Adrenal gland (tissue), 19 donors: ENCODE measurements at regions of chr6 and their contacts with region 1.

Region 1: GRCh38 chr6:15458021-15458459 is 204.8 kb downstream of the DTNBP1 start:
- DNase-seq: no peak
- H3K4me3 ChIP-seq: no peak overlapping the region
- H3K27ac ChIP-seq: no peak overlapping the region
- H3K4me1 ChIP-seq: peaks cover 19 to 36% of the 10 kb centered on the region in 2 donors
- H3K27me3 ChIP-seq: no peaks in the 10 kb centered on the region
- CTCF ChIP-seq: no peak
- POLR2A ChIP-seq: no peak

Region 2: DNA sequence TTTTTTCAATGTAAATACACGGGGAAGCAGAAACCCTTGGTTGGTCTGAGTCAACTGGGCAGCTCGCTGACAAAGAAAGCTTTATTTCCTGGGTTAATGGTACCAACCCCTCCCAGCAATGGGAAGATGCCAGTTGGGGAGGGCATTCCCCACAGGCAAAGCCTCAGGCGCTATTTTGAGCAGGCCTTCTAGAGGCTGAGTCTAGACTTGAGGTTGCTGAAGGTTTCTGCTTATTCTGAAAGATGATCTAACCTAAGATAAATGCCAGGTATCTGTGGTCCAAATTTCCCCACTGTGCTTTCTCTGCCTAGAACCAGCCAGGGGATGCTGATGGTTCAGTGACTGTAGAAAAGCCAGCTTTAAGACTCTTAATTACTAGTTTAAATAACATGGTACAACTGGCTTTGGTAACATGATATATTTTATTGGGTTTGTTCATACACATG is 384.7 kb before region 1 on chr6:
- intact Hi-C with region 1: loop called in 1 of 2 experiments (anchors 10 kb)
- DNase-seq: no peak
- H3K4me3 ChIP-seq: no peak overlapping the region
- H3K27ac ChIP-seq: no peak overlapping the region
- H3K4me1 ChIP-seq: no peaks in the 10 kb centered on the region
- H3K27me3 ChIP-seq: no peaks in the 10 kb centered on the region
- CTCF ChIP-seq: no peak
- POLR2A ChIP-seq: no peak

Region 3: GRCh38 chr6:15441215-15441868 is 16.7 kb before region 1 on chr6:
- intact Hi-C with region 1: no loop called
- DNase-seq: peak; percentile 34 to 79 (median 51)
- H3K4me3 ChIP-seq: no peak overlapping the region
- H3K27ac ChIP-seq: no peak overlapping the region
- H3K4me1 ChIP-seq: peaks cover 15 to 57% of the 10 kb centered on the region in 2 donors
- H3K27me3 ChIP-seq: no peaks in the 10 kb centered on the region
- CTCF ChIP-seq: peak; percentile 64 to 80 (median 76)
- POLR2A ChIP-seq: no peak